ENCODE measurements at regions of chr2 and their contacts with region 1.

Region 1: GRCh38 chr2:121689356-121689755 is 40.1 kb upstream of the CLASP1 start:
- DNase-seq: no peak
- ATAC-seq: no peak
- H3K4me3 Mint-ChIP-seq: no peak overlapping the region
- H3K27ac Mint-ChIP-seq: no peak overlapping the region
- H3K4me1 Mint-ChIP-seq: peaks cover 44% of the 10 kb centered on the region
- H3K27me3 Mint-ChIP-seq: peaks cover 11% of the 10 kb centered on the region
- CTCF ChIP-seq: no peak

Region 2: DNA sequence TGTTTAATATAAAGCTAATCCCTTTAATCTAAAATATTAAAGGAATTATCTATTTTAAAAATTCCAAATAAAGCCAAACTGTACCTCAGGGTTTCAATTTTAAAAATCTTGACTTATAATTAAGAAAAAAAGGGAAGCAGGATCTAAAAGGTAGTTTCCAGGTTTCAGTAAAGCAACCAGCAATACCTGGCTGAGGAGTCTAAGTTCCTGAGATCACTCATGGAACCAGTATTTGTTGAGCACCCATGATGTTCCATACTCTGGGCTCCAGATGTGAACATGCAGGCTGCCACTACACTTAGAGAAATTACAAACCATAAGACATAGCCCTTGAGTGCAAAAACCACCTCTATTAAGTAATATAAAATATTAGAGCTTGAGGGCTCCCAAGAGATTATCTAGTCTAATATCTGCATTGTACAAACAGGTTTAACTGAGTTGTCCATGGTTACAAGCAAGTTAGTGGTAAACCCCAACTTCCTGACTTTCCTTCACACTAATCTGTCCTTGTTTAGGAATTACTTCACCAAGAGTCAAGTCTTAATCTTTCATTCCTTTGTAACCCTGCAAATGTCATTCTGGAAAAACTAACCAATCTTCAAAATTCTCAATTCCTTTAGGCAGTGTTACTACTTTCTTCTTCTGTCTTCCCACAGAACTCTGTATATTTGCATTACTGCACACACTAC is 89.2 kb before region 1 on chr2:
- CTCF ChIA-PET with region 1: no interaction called
- POLR2A ChIA-PET with region 1: interaction called, 10 read pairs
- DNase-seq: no peak
- ATAC-seq: no peak
- H3K4me3 Mint-ChIP-seq: no peak overlapping the region
- H3K27ac Mint-ChIP-seq: no peak overlapping the region
- H3K4me1 Mint-ChIP-seq: peaks cover 12% of the 10 kb centered on the region
- H3K27me3 Mint-ChIP-seq: no peaks in the 10 kb centered on the region
- CTCF ChIP-seq: no peak

Region 3: GRCh38 chr2:121828281-121828731 is 138.9 kb after region 1 on chr2:
- CTCF ChIA-PET with region 1: no interaction called
- POLR2A ChIA-PET with region 1: no interaction called
- DNase-seq: no peak
- ATAC-seq: peak; percentile 37; the same call in 1 of the 2 replicates
- H3K4me3 Mint-ChIP-seq: no peak overlapping the region
- H3K27ac Mint-ChIP-seq: no peak overlapping the region
- H3K4me1 Mint-ChIP-seq: peaks cover 17% of the 10 kb centered on the region
- H3K27me3 Mint-ChIP-seq: no peaks in the 10 kb centered on the region; the same call in 1 of the 2 replicates
- CTCF ChIP-seq: no peak

Measured in WTC11 (cell line).